ENCODE measurements at regions of chr10 and their contacts with region 1.

Region 1: DNA sequence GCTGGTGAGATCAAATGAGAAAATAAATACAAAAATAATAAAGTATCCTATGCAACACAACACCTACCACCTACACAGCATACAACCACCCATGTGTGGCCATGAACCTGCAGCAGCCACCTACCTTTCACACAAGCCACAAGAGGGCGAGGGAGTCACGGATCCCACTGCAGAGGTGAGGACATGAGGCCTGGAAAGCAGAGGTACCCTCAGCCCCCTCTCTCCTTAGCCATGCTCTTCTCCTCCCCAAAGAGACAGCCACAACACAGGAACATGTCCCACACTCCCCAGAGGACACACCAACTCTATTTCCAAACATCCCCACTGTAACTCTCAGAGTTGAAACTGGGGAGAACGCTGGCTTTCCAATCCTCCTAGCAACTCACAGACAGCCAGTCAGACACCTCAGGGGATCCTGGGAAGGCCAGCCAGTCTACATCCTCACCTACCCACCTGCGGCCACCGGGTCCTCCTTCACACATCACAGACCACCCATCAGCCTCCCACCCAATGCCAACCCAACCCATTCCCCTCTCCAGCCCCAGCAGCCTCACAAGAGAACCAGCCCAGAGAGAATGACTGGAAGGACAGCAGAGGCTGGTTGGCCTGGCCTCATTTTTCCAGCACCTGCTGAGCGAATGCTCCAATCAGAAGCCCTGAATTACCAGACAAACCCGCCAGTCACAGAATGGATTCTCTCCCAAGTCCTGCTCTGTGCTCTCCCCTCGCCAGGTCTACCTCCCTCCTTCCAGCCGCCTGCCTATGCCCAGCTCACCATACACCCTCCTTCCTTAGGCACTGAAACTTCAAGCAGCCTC is 18.4 kb downstream of the DLG5 start:
- DNase-seq: no peak
- H3K4me3 ChIP-seq: no peak overlapping the region
- H3K27ac ChIP-seq: no peak overlapping the region
- H3K4me1 ChIP-seq: peaks cover 12% of the 10 kb centered on the region
- H3K27me3 ChIP-seq: no peaks in the 10 kb centered on the region
- CTCF ChIP-seq: peak; percentile 39 to 52

Region 2: DNA sequence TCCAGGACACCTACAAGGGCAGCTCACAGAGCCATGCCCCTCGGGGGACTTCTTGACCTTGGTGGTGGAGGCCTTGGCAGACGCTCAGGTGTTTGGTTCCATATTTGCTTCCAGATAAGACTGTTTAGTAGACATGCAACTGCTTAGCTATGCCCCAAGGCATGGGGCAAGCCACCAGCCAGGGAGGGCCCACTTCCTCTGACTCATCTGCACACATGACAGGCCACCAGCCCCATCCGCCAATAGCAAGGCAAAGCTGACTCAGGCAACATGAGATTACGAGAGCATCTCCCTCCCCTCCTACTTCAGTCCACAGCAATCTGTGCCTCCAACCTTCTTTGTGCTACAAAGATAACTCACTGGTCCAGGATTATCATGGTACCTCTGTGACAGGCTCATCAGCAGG is 325.4 kb before region 1 on chr10:
- CTCF ChIA-PET with region 1: no interaction called
- dilution Hi-C with region 1: no loop called
- in situ Hi-C with region 1: no loop called
- intact Hi-C with region 1: no loop called
- DNase-seq: peak; percentile 88
- H3K4me3 ChIP-seq: no peak overlapping the region
- H3K27ac ChIP-seq: peak overlapping the region; percentile 47
- H3K4me1 ChIP-seq: peaks cover 52% of the 10 kb centered on the region
- H3K27me3 ChIP-seq: no peaks in the 10 kb centered on the region
- CTCF ChIP-seq: no peak

Region 3: DNA sequence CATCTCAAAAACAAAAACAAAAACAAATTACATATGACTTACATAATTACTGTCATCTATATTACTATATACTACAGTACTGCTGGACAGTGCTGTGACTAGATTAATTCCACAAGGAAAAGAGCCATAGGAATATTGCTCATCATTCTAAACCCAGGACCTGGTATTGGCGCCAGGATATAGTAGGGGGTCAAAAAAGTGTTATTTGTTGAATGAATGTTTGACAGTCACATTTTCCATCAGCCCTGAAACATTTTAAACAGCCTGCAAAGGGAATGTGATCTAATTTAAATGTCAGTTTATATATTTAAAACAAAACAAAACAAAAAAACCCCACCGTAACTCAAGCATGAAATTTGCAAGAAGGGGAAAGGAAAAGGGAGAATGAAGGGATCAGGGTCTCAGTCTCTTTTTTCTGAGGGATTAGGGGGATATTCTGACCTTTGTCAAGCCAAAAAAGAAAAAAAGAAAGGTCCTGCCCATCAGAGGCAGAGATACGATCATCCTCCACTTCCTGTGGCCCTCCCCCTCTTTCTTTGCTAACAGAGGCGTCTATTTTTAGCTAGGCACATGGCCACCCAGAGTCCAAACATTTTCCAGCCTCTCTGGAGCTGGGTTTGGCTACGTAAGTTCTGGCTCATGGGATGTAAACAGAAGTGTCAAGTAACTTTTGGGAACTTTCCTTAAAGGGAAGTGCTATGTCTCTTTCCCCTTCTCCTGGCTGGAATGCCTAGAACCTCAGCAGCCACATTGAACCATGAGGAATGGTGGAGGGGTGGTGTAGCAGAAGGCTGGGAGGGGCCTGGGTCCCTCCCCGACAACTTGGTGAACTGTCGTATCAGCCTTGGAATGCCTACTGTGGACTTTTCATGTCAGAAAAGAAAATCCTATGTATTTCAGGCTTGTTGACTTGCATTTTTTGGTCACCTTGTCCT is 63.0 kb after region 1 on chr10:
- CTCF ChIA-PET with region 1: no interaction called
- dilution Hi-C with region 1: no loop called
- in situ Hi-C with region 1: no loop called
- intact Hi-C with region 1: loop called (anchors 2 kb)
- DNase-seq: no peak
- H3K4me3 ChIP-seq: no peak overlapping the region
- H3K27ac ChIP-seq: no peak overlapping the region
- H3K4me1 ChIP-seq: peaks cover 6% of the 10 kb centered on the region
- H3K27me3 ChIP-seq: no peaks in the 10 kb centered on the region
- CTCF ChIP-seq: no peak

Region 4: DNA sequence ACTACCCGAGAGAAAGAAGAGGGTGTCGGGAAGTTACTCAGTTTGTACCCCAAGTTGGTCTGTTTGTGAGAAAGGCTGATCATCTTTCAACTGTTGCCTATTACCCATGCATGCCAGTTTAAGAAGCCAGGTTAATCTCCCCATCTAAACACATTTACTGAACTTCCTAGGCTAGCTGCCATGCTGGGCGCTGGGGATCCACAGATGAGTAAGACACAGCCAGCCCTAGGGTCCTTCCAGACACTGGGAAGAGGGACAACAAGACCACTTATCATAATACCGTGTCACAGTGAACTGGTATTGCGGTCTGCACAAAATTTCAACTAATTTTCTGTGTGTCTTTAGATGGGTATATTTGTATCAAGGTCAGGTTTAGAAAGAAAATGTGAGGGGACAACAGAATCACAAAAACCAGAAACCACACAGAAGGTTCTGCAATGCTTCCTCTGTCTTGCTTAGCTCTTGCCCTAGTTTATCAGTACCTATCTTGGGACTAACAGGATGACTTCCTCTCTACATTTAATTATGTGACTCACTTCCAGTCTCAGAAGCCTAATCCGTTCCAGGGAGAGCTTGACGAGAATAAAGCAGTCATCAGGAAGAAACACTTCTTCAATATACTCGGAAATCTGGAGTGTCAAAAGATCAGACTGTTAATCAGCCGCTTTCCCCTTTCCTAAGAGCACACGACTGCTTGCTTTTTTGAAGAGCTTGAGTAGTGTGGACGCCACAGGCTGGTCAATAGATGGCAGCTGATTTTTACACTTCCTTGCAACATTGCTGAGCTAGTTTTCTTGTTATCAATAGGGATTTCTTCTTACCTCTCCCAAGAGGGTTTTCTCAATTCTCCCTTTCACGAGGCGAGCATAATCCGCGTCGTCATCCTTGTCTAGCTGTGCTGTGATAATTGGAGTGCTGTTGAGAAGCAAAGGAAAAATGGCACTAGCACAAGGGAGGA is 75.6 kb after region 1 on chr10:
- CTCF ChIA-PET with region 1: no interaction called
- dilution Hi-C with region 1: loop called (anchors 10 kb)
- in situ Hi-C with region 1: no loop called
- intact Hi-C with region 1: no loop called
- DNase-seq: no peak
- H3K4me3 ChIP-seq: no peak overlapping the region
- H3K27ac ChIP-seq: no peak overlapping the region
- H3K4me1 ChIP-seq: no peaks in the 10 kb centered on the region
- H3K27me3 ChIP-seq: no peaks in the 10 kb centered on the region
- CTCF ChIP-seq: no peak

Region 5: GRCh38 chr10:78029269-78030226 is 121.4 kb after region 1 on chr10 and contains the start of gene POLR3A:
- CTCF ChIA-PET with region 1: no interaction called
- dilution Hi-C with region 1: no loop called
- in situ Hi-C with region 1: no loop called
- intact Hi-C with region 1: no loop called
- DNase-seq: peak; percentile 96
- H3K4me3 ChIP-seq: peak within 1 kb of the TSS; percentile 87 to 94 (median 87)
- H3K27ac ChIP-seq: peak within 1 kb of the TSS; percentile 74
- H3K4me1 ChIP-seq: peaks cover 38% of the 10 kb centered on the region
- H3K27me3 ChIP-seq: no peaks in the 10 kb centered on the region
- CTCF ChIP-seq: peak; percentile 53 to 72
- total RNA-seq, gene POLR3A: 20.8 to 21.2 TPM

Measured in mammary epithelial cell (primary cell).